Activated naive CD4-positive, alpha-beta T cell treated with anti-CD3 and anti-CD28 coated beads for 36 hours (primary cell): ENCODE measurements at regions of chr20 and their contacts with region 1.

Region 1: GRCh38 chr20:3767427-3768341 is at the start of gene ADISSP:
- DNase-seq: peak; percentile 98
- H3K4me3 Mint-ChIP-seq: peak within 1 kb of the TSS; percentile 82
- H3K27ac Mint-ChIP-seq: peak within 1 kb of the TSS; percentile 82
- H3K4me1 Mint-ChIP-seq: peaks cover 33% of the 10 kb centered on the region
- H3K27me3 Mint-ChIP-seq: no peaks in the 10 kb centered on the region
- total RNA-seq, gene ADISSP: 47.9 to 50.4 TPM

Region 2: GRCh38 chr20:3679749-3680700 is 87.7 kb before region 1 on chr20:
- CTCF ChIA-PET with region 1: interaction called, 5 read pairs
- intact Hi-C with region 1: loop called (anchors 1 kb)
- DNase-seq: no peak
- H3K4me3 Mint-ChIP-seq: no peak overlapping the region
- H3K27ac Mint-ChIP-seq: no peak overlapping the region
- H3K4me1 Mint-ChIP-seq: no peaks in the 10 kb centered on the region
- H3K27me3 Mint-ChIP-seq: peaks cover 49% of the 10 kb centered on the region

Region 3: GRCh38 chr20:3753098-3753980 is 14.3 kb before region 1 on chr20:
- CTCF ChIA-PET with region 1: interaction called, 23 read pairs
- intact Hi-C with region 1: loop called (anchors 1 kb)
- DNase-seq: peak; percentile 81
- H3K4me3 Mint-ChIP-seq: no peak overlapping the region
- H3K27ac Mint-ChIP-seq: no peak overlapping the region
- H3K4me1 Mint-ChIP-seq: peaks cover 7% of the 10 kb centered on the region
- H3K27me3 Mint-ChIP-seq: no peaks in the 10 kb centered on the region

Region 4: DNA sequence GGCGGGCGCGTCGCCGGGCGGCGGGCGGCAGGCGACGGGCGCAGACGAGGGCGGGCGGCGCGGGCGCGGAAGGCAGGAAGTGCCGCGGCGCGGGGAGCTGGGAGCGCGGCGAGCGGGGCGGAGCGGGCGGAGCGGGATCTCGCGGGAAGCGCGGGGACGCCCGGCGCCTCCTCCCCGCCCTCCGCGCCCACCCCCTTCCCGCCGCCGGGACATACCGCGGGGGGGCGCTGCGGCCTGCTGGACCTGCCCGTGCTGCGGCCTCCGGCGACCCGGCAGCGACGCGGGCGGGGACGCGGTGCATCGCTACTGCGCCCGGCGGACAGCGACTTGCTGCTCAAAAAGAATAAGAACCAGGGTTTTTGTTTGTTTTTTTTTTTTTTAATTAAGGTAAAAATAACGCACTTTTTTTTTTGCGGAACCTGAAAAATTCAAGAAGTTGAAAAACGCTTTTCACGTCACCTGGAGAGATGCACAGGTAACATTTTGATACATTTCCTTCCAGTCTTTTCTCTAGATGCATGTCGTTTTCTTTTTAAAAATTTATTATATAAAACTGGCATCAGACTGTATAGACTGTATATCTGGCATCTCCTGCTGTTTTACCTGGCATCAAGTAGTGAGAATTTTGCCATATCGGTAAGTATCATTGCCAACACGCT is 19.1 kb after region 1 on chr20 and contains the start of gene CENPB:
- CTCF ChIA-PET with region 1: interaction called, 5 read pairs
- intact Hi-C with region 1: loop called (anchors 1 kb)
- DNase-seq: peak; percentile 91
- H3K4me3 Mint-ChIP-seq: peak within 1 kb of the TSS; percentile 83
- H3K27ac Mint-ChIP-seq: peak within 1 kb of the TSS; percentile 80
- H3K4me1 Mint-ChIP-seq: peaks cover 39% of the 10 kb centered on the region
- H3K27me3 Mint-ChIP-seq: no peaks in the 10 kb centered on the region
- total RNA-seq, gene CENPB: 29.1 to 30.3 TPM

Region 5: GRCh38 chr20:3811467-3812258 is 44.0 kb after region 1 on chr20:
- CTCF ChIA-PET with region 1: interaction called, 6 read pairs
- intact Hi-C with region 1: loop called (anchors 1 kb)
- DNase-seq: peak; percentile 97
- H3K4me3 Mint-ChIP-seq: peak overlapping the region; percentile 86
- H3K27ac Mint-ChIP-seq: peak overlapping the region; percentile 97
- H3K4me1 Mint-ChIP-seq: peaks cover 70% of the 10 kb centered on the region
- H3K27me3 Mint-ChIP-seq: no peaks in the 10 kb centered on the region

Region 6: DNA sequence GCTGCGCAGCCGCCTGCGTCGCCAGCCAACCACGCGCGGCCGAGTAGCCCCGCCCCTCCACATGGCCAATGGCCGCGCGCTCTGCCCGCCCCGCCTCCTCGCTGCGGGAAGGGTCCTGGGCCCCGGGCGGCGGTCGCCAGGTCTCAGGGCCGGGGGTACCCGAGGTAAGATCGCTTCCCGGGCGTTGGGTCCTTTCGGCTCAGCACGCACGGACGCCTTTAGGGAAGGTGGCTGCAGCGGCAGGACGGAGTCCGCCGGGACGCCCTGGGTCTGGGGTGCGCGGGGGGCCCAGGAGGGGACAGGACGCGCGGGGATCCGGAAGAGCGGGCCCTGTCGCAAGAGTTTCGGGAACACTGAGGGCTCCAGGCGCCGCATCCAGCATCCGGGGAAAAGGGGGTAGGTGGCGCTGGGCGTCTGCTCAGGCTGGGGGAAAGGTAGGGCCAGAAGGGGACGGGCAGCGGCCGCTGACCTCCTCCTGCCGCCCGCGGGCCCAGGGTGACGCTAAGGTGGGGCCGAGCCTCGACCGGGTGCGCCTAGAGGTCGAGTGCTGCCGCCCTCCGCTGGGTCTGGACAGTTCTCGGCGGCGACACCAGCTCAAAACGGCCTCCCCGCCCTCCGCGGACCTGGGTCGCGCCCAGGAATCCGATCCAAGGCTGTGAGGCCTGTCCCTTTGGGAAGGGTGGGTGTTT is 79.2 kb after region 1 on chr20 and contains the start of gene MAVS:
- CTCF ChIA-PET with region 1: no interaction called
- intact Hi-C with region 1: loop called (anchors 1 kb)
- DNase-seq: peak; percentile 84
- H3K4me3 Mint-ChIP-seq: peak within 1 kb of the TSS; percentile 85
- H3K27ac Mint-ChIP-seq: peak within 1 kb of the TSS; percentile 83
- H3K4me1 Mint-ChIP-seq: peaks cover 29% of the 10 kb centered on the region
- H3K27me3 Mint-ChIP-seq: no peaks in the 10 kb centered on the region
- total RNA-seq, gene MAVS: 14.8 to 16.0 TPM

Region 7: DNA sequence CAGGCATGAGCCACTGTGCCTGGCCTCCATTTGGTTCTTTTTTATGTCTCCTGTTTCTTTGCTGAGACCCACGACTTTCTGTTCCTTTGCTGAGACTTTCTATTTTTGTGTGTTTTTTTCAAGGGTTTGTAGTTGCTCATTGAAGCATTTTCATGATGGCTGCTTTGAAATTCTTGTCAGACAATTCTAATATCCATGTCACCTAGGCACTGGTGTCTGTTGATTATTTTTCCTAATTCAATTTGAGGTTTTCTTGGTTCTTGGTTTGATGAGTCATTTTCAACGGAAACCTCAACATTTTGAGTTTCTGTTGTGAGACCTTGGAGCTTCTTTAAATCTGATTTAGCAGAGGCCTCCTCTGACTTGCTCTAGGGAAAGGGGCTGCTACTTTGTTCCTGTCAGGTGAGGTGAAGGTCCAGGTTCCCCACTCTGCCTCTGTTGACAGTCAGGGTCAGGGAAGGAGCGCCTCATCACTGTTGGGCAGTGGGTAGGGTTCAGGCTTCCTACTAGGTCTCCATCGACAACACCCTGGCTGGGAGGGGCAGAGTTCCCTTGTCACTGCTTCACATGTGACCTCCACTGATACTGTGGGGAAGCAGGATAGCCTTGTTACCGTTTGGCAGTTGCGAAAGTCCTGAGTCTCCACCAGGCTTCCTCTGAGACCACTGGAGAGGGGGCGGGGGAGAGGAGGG is 314.9 kb after region 1 on chr20:
- CTCF ChIA-PET with region 1: interaction called, 3 read pairs
- intact Hi-C with region 1: loop called (anchors 5 kb)
- DNase-seq: peak; percentile 67
- H3K4me3 Mint-ChIP-seq: peak overlapping the region; percentile 57
- H3K27ac Mint-ChIP-seq: peak overlapping the region; percentile 91
- H3K4me1 Mint-ChIP-seq: peaks cover 44% of the 10 kb centered on the region
- H3K27me3 Mint-ChIP-seq: peaks cover 4% of the 10 kb centered on the region

Region 8: DNA sequence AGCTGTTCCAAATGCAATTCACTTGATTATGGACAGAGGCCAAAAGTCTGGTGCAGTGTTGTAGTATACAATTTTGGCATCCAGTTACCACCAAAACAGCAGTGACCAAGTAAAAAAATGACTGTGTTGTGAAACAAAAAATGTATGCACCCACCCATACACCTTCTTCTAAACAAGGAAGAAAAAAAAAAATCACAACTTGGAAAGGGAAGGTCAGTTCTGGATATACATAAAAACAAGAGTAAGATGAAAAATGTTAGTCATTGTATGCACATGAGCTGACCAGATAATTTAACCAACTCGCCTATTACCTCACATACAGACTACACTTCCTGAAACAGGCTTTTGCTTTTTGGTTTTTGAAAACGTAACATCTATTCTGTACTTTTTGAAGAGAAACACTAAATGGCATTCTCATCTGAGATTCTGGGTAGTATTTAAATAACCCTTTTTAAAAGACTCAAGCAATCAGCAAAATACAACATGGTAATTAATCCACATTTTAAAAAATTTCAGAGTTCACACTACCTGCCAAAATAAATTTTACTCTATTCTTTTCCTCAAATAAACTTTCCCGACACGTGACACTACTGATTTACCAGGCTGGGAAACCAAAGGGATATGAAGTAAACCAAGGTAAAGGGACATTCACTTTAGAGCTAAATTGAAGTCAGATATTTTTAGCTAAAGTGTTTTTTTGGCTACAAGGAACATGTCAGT is 1840.9 kb after region 1 on chr20:
- CTCF ChIA-PET with region 1: no interaction called
- intact Hi-C with region 1: no loop called
- DNase-seq: no peak
- H3K4me3 Mint-ChIP-seq: peak overlapping the region; percentile 92
- H3K27ac Mint-ChIP-seq: peak overlapping the region; percentile 99
- H3K4me1 Mint-ChIP-seq: peaks cover 57% of the 10 kb centered on the region
- H3K27me3 Mint-ChIP-seq: no peaks in the 10 kb centered on the region